PC-9 (cell line): ENCODE measurements at regions of chr2 and their contacts with region 1.

Region 1: DNA sequence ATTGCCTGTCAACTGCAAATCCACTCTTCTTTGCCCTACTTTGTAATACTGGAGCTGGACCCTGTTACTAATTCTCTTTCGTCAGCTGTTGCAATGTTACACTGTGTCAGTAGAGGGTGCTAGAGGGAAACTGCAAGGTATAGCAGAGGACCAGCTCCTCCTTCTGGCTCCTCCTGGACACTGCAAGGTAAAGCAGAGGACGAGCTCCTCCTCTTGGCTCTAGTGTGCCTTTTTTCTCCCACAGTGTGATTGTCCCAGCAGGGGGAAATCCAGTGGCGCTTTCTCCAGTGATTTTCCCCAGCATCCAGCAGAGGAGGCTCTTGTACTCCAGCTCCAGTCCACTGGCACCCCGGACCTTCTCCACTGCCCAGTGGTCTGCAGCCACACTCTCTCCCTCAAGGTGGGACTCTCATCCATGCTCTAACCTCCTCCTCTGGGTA is 95.6 kb downstream of the CAPN13 start:
- DNase-seq: peak; percentile 77 to 82
- H3K4me3 ChIP-seq: no peak overlapping the region
- H3K27ac ChIP-seq: no peak overlapping the region
- H3K4me1 ChIP-seq: no peaks in the 10 kb centered on the region
- H3K27me3 ChIP-seq: no peaks in the 10 kb centered on the region
- CTCF ChIP-seq: peak; percentile 99

Region 2: DNA sequence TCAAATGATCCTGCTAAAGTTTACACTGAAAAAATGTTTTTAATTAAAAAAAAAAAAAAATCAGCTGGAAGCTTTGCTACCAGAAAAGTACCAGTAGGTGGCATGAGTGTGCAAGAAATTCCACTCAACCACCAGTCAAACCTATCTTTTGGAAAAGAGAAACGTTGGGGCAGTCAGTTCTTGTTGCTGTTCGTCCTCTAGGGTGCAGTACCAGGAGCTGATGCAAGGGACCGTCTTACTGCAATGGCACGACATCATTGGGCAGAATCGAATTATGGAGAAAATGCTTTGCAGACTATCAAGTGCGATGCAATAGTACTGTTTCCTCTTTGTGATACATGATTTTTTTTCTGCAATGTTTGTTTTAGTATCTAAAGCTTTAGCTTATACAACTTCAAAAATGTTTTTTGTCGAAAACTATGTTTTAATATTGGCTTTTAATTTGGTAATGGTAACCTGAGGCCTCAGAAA is 546.6 kb before region 1 on chr2:
- CTCF ChIA-PET with region 1: interaction called, 78 read pairs
- POLR2A ChIA-PET with region 1: no interaction called
- intact Hi-C with region 1: loop called (anchors 1 kb)
- DNase-seq: peak; percentile 54 to 84
- H3K4me3 ChIP-seq: no peak overlapping the region
- H3K27ac ChIP-seq: no peak overlapping the region
- H3K4me1 ChIP-seq: peaks cover 21% of the 10 kb centered on the region
- H3K27me3 ChIP-seq: peaks cover 2% of the 10 kb centered on the region; the same call in 1 of the 2 replicates
- CTCF ChIP-seq: peak; percentile 90

Region 3: DNA sequence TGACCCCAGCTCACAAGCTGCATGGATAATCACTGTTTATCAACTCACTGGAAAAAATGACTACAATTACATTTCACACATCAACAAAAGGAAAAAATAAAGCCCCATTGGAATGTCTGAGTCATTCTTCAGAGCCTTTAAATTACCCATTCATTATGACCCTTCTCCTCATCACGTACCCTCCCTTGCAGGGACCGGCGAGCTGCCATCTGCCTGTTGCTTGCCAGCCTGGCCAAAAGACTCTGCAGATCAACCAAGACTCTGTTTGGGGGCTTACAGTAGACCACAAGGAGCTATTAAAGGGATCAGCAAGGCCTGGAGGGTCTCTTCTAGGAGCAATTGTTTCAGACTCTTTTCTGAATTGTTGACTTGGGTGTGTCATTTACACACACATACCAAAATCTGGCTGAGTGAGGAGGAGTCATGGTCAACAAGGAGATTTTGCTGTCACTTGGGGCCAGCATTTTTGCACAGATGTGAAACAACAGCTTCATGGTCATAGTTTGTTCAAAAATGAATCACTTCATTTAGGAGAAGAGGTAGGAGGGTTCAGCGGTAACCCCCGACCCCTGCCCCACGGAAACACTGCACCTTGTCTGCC is 438.3 kb before region 1 on chr2:
- CTCF ChIA-PET with region 1: no interaction called
- POLR2A ChIA-PET with region 1: no interaction called
- intact Hi-C with region 1: loop called (anchors 10 kb)
- DNase-seq: peak; percentile 77 to 91
- H3K4me3 ChIP-seq: peak overlapping the region; percentile 15; the same call in 1 of the 2 replicates
- H3K27ac ChIP-seq: peak overlapping the region; percentile 68
- H3K4me1 ChIP-seq: peaks cover 57% of the 10 kb centered on the region
- H3K27me3 ChIP-seq: no peaks in the 10 kb centered on the region
- CTCF ChIP-seq: no peak

Region 4: GRCh38 chr2:30565851-30566358 is 145.8 kb before region 1 on chr2:
- CTCF ChIA-PET with region 1: interaction called, 10 read pairs
- POLR2A ChIA-PET with region 1: no interaction called
- intact Hi-C with region 1: no loop called
- DNase-seq: no peak
- H3K4me3 ChIP-seq: no peak overlapping the region
- H3K27ac ChIP-seq: no peak overlapping the region
- H3K4me1 ChIP-seq: no peaks in the 10 kb centered on the region
- H3K27me3 ChIP-seq: no peaks in the 10 kb centered on the region
- CTCF ChIP-seq: no peak

Region 5: DNA sequence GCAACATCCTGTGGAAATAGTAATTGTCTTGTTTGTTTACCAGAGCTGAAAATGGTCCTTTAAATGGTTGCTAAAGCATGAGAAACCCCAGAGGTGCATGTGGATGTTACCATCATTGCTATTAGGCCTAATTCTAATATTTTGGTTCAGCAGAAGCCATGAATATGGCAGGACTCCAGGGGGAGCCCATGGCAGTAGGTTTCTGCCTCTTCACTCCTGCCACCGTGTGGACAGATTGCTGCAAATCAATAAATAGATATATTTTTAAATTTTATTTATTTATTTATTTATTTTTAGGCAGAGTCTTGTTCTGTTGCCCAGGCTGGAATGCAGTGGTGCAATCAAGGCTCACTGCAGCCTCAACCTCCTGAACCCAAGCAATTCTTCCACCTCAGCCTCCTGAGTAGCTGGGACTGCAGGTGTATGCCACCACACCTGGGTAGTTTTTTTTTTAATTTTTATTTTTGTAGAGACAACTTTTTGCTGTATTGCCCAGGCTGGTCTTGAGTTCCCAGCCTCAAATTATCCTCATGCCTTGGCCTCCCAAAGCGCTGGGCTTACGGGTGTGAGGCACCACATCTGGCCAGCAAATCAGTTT is 150.5 kb after region 1 on chr2:
- CTCF ChIA-PET with region 1: interaction called, 4 read pairs
- POLR2A ChIA-PET with region 1: no interaction called
- intact Hi-C with region 1: loop called (anchors 2 kb)
- DNase-seq: peak; percentile 38 to 67
- H3K4me3 ChIP-seq: no peak overlapping the region
- H3K27ac ChIP-seq: no peak overlapping the region
- H3K4me1 ChIP-seq: no peaks in the 10 kb centered on the region
- H3K27me3 ChIP-seq: no peaks in the 10 kb centered on the region
- CTCF ChIP-seq: peak; percentile 86

Region 6: GRCh38 chr2:31333527-31334183 is 622.0 kb after region 1 on chr2:
- CTCF ChIA-PET with region 1: no interaction called
- POLR2A ChIA-PET with region 1: no interaction called
- intact Hi-C with region 1: loop called (anchors 1 kb)
- DNase-seq: peak; percentile 62 to 74
- H3K4me3 ChIP-seq: no peak overlapping the region
- H3K27ac ChIP-seq: no peak overlapping the region
- H3K4me1 ChIP-seq: no peaks in the 10 kb centered on the region; the same call in 1 of the 2 replicates
- H3K27me3 ChIP-seq: no peaks in the 10 kb centered on the region
- CTCF ChIP-seq: peak; percentile 97

Region 7: DNA sequence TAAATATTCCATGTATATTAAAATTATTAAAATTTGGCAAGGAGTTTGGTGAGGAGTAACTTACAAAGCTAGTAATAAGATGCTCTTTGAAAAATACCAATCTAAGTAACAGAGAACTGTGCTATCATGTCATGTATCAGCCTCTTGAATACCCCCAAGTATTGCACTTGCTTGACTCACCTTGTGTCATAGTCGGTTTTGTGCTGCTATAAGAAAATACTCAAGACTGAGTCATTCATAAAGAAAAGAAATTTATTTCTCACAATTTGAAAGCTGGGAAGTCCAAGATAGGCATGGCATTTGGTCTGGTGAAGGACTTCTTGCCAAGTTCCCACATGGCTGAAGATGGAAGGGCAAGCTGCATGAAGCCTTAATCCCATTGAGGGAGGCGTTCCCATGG is 1119.9 kb after region 1 on chr2:
- CTCF ChIA-PET with region 1: no interaction called
- POLR2A ChIA-PET with region 1: no interaction called
- intact Hi-C with region 1: loop called (anchors 10 kb)
- DNase-seq: no peak
- H3K4me3 ChIP-seq: no peak overlapping the region
- H3K27ac ChIP-seq: no peak overlapping the region
- H3K4me1 ChIP-seq: 0 out of 2 replicates have a peak, but pooled peaks cover 8% of the 10 kb centered on the region
- H3K27me3 ChIP-seq: no peaks in the 10 kb centered on the region
- CTCF ChIP-seq: no peak